Endothelial cell of umbilical vein (primary cell): ENCODE measurements at regions of chr1 and their contacts with region 1.

Region 1: GRCh38 chr1:153626922-153627796 is at the start of gene S100A13:
- DNase-seq: peak; percentile 90
- H3K4me3 ChIP-seq: peak within 1 kb of the TSS; percentile 57 to 74 (median 62)
- H3K27ac ChIP-seq: peak within 1 kb of the TSS; percentile 81
- H3K4me1 ChIP-seq: peaks cover 14% of the 10 kb centered on the region
- H3K27me3 ChIP-seq: no peaks in the 10 kb centered on the region
- CTCF ChIP-seq: peak; percentile 93
- POLR2A ChIP-seq: peak; percentile 98
- total RNA-seq, gene S100A13: 155 and 255 TPM in 2 replicates

Region 2: DNA sequence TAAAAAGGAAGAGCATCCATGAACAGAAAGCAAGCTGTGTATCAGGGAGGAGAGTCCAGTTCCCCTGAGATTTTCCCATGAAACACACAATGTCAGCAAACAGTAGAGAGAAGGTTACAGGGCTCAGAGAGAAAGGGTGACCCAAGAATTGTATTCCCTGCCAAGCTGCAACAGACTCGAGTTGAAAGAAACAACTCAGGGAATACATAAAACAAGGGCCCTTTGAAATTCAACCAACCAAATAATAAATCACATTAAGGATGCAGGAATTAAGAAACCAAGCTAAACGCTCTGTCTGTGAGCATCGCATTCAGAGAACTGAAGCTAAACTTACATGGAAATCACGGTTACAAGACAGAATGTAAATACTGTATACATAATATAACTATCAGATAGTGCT is 34.4 kb before region 1 on chr1:
- CTCF ChIA-PET with region 1: interaction called, 12 read pairs
- POLR2A ChIA-PET with region 1: interaction called, 8 read pairs
- dilution Hi-C with region 1: no loop called
- intact Hi-C with region 1: no loop called
- DNase-seq: no peak
- H3K4me3 ChIP-seq: no peak overlapping the region
- H3K27ac ChIP-seq: no peak overlapping the region
- H3K4me1 ChIP-seq: no peaks in the 10 kb centered on the region
- H3K27me3 ChIP-seq: no peaks in the 10 kb centered on the region
- CTCF ChIP-seq: no peak
- POLR2A ChIP-seq: no peak

Region 3: DNA sequence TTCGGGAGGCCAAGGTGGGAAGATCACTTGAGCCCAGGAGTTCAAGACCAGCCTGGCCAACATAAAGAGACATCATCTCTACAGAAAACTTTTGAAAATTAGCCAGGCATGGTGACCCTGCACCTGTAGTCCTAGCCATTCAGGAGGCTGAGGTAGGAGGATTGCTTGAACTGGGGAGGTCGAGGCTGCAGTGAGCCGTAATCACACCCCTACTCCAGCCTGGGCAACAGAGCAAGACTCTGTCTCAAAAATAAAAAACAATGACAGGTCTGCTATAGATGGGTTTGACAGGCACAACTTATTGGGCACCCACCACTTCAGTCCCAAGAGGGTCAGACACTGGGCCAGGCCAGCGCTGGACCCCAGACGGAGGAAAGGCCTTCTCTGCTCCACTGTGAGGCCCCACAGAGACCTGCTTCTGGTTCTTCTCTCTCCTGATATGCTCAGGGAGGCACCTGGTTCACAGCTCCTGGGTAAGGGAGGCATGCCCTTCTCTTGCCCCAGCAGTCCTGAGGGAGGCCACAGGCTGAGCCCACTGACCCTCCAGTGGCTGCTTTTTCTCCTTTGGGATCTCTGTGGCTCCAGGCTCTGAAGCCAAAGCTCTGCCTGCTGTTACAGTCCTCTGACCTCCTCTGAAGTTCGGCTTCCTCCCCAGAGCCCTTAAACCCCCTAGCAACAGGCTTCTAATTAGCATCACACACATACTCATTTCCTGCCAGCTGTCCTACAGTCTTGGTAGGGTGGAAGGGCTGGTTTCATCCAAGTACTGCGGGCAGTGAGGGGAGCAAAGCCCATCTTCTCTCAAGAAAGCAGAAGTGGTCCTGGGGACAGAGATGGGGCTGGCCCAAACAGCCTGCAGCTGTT is 28.6 kb before region 1 on chr1:
- CTCF ChIA-PET with region 1: interaction called, 12 read pairs
- POLR2A ChIA-PET with region 1: interaction called, 11 read pairs
- dilution Hi-C with region 1: no loop called
- intact Hi-C with region 1: no loop called
- DNase-seq: peak; percentile 78
- H3K4me3 ChIP-seq: no peak overlapping the region
- H3K27ac ChIP-seq: peak overlapping the region; percentile 54
- H3K4me1 ChIP-seq: peaks cover 14% of the 10 kb centered on the region
- H3K27me3 ChIP-seq: no peaks in the 10 kb centered on the region
- CTCF ChIP-seq: no peak
- POLR2A ChIP-seq: no peak

Region 4: DNA sequence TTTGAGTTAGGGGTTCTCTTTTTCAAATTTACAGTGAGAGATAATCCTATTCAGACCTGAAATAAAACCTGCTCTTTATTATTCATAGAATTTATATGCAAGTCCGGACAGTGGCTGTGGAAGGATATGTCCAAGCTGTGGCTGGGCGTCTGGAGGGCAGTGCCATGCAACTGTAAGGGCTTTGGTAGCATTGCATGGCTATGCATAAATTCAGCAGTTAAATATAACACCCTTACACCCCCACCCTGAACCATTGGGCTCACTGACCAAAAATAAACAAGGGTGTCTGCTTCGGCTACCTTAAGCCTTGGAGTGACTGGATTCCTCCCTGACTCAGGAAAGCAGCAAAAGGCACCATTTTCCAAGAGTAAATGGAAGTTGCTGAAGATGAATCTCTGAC is 12.1 kb after region 1 on chr1:
- CTCF ChIA-PET with region 1: interaction called, 12 read pairs
- POLR2A ChIA-PET with region 1: interaction called, 8 read pairs
- dilution Hi-C with region 1: no loop called
- intact Hi-C with region 1: no loop called
- DNase-seq: no peak
- H3K4me3 ChIP-seq: no peak overlapping the region
- H3K27ac ChIP-seq: no peak overlapping the region
- H3K4me1 ChIP-seq: peaks cover 6% of the 10 kb centered on the region
- H3K27me3 ChIP-seq: no peaks in the 10 kb centered on the region
- CTCF ChIP-seq: no peak
- POLR2A ChIP-seq: no peak

Region 5: DNA sequence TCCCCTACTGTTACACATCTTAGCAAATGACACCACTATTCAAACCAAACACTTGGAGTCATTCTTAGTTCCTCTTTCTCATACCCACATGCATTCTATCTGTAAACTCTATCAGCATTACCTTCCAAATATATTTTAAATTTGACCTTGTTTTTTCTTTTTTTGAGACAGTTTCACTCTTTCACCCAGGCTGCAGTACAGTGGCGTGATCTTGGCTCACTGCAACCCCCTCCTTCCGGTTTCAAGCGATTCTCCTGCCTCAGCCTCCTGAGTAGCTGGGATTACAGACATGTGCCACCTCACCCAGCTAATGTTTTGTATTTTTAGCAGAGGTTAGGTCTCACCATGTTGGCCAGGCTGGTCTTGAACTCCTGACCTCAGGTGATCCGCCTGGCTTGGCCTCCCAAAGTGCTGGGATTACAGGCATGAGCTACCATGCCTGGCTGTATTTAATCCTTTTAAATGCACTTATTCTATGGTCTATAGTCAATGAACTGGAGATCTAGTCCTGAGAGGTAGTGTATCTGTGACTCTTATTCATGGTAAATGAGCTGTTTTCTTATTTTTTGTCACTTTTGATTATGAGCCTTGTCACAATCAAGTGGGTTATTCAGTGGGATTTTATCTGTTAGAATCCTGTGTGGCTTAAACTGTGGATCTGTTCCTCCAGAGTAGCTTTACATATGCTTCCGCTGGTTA is 222.5 kb after region 1 on chr1:
- CTCF ChIA-PET with region 1: no interaction called
- POLR2A ChIA-PET with region 1: no interaction called
- dilution Hi-C with region 1: no loop called
- intact Hi-C with region 1: no loop called
- DNase-seq: no peak
- H3K4me3 ChIP-seq: no peak overlapping the region
- H3K27ac ChIP-seq: no peak overlapping the region
- H3K4me1 ChIP-seq: no peaks in the 10 kb centered on the region
- H3K27me3 ChIP-seq: no peaks in the 10 kb centered on the region
- CTCF ChIP-seq: no peak
- POLR2A ChIP-seq: no peak